Activated CD8-positive, alpha-beta T cell treated with anti-CD3 and anti-CD28 coated beads for 36 hours (primary cell): ENCODE measurements at regions of chr6 and their contacts with region 1.

Region 1: GRCh38 chr6:35522660-35523658 is 10.3 kb upstream of the TULP1 start:
- DNase-seq: peak; percentile 81
- ATAC-seq: peak; percentile 91
- H3K4me3 Mint-ChIP-seq: peak overlapping the region; percentile 63
- H3K27ac Mint-ChIP-seq: peak overlapping the region; percentile 63
- H3K4me1 Mint-ChIP-seq: peaks cover 9% of the 10 kb centered on the region
- H3K27me3 Mint-ChIP-seq: no peaks in the 10 kb centered on the region
- CTCF ChIP-seq: peak; percentile 100

Region 2: DNA sequence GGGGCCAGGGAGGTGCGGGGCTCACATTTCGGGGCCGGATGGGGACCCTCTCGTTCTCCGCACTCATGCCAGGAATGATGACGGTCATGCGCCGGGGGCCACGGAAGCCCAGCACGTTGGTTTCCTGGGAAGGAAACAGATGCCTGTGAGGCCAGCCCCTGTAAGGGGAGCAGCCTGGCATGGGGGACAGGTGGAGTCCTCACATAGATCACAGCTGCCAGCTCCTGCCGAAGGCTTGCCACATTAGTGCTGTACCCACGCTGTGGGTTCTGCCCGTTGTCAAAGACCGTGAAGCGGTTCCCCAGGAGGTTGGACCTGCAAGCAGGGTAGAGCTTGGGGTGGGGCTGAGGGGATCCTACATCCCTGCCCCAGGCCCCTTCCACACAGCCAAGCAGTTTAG is 19.4 kb before region 1 on chr6:
- CTCF ChIA-PET with region 1: interaction called, 21 read pairs
- POLR2A ChIA-PET with region 1: no interaction called
- intact Hi-C with region 1: no loop called
- DNase-seq: no peak
- ATAC-seq: no peak
- H3K4me3 Mint-ChIP-seq: no peak overlapping the region
- H3K27ac Mint-ChIP-seq: no peak overlapping the region
- H3K4me1 Mint-ChIP-seq: peaks cover 3% of the 10 kb centered on the region
- H3K27me3 Mint-ChIP-seq: peaks cover 9% of the 10 kb centered on the region
- CTCF ChIP-seq: no peak

Region 3: GRCh38 chr6:35552285-35552917 is 29.4 kb after region 1 on chr6:
- CTCF ChIA-PET with region 1: interaction called, 91 read pairs
- POLR2A ChIA-PET with region 1: interaction called, 3 read pairs
- intact Hi-C with region 1: no loop called
- DNase-seq: peak; percentile 82
- ATAC-seq: peak; percentile 88
- H3K4me3 Mint-ChIP-seq: no peak overlapping the region
- H3K27ac Mint-ChIP-seq: no peak overlapping the region
- H3K4me1 Mint-ChIP-seq: peaks cover 4% of the 10 kb centered on the region
- H3K27me3 Mint-ChIP-seq: no peaks in the 10 kb centered on the region
- CTCF ChIP-seq: peak; percentile 94